Thyroid gland (tissue), 4 donors: ENCODE measurements at regions of chr22 and their contacts with region 1.

Region 1: DNA sequence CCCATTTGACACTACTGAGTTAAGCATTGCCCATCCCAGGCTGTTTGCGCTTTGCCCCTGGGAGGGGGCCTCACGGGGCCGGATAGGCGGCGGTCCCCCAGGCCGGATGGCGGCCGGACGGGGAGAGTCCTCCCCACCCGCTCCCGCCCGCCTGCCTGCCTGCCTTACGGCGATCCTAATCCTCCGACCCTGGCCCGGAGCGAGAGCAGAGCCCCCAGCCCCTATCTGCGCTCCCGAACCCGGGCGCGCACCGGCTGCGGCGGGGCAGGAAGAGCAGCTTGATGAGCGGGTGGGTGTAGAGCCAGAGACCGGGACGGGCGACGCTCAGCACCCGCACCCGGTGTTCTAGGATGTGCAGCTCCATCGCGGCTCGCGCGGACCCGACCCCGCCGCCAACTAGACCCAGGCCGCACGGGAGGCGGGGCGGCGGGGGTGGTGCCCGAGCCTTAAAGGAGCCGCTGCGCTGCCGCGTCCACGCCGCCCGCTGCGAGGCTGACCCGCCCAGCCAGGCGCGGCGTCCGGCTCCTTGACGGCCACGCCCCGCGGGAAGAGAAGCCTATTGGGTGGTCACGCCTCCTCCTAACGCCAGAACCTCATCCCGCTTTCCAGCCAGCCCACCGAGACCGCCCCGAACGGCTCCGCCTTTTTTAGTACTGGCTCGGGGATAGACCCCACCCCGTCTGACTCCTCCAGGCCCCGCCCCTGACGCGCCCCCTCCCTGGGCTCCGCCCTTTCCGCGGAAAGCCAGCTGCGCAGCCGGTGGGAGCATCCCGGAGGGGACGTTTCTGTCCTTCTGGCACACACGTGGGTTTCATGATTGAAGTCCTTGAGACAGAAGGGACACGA is at the start of gene CASTOR1:
- DNase-seq: peak; percentile 100
- H3K4me3 ChIP-seq: peak within 1 kb of the TSS; percentile 92 to 99 (median 96)
- H3K27ac ChIP-seq: peak within 1 kb of the TSS; percentile 96 to 97 (median 97)
- H3K4me1 ChIP-seq: peaks cover 33 to 38% of the 10 kb centered on the region in 2 donors
- H3K27me3 ChIP-seq: no peaks in the 10 kb centered on the region
- CTCF ChIP-seq: no peak
- POLR2A ChIP-seq: peak in 1 of 2 donors; percentile 87
- total RNA-seq, gene CASTOR1: 16.5 to 36.0 (median 27.7) TPM

Region 2: DNA sequence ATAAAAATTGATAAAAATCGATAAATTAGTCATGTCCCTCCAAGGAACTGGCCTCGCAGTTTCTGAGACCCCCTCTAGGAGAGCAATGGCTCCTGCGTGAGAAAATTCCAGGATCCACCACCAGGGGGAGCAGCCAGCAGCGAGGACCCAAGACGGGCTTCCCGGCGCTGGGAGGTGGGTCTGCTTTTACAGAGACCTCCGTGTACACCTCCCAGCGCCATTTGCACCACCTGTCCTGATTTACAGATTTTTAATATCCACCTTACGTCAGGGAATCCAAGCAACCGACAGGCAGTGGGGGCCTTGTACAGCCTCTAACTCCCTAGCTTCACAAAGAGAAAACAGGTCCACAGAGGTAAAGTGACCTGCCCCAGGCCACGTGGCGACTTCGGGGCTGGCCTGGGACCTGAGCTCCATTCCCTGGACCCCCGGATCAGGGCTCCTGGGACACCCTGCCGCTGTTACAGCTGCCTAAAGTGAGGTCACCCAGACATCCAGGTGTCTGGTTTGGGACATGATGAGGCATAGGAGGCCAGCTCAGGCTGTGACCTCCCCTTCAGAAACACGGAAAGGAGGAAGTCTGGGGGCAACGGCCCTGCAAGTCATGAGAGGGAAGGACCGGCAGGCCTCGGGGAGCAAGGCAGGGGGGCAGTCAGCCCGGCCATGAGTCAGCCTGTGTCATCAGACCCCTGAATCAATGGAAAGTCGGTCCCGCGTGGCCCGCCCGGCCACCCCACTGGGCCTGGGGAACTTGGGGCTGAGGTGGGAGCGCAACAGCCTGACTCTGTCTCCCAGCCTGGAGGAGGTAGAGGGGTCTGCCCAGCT is 26.2 kb before region 1 on chr22:
- intact Hi-C with region 1: loop called (anchors 2 kb)
- DNase-seq: peak; percentile 68 to 70
- H3K4me3 ChIP-seq: no peak overlapping the region
- H3K27ac ChIP-seq: no peak overlapping the region
- H3K4me1 ChIP-seq: peaks cover 4 to 6% of the 10 kb centered on the region in 2 donors
- H3K27me3 ChIP-seq: no peaks in the 10 kb centered on the region
- CTCF ChIP-seq: peak; percentile 90 to 98 (median 95)
- POLR2A ChIP-seq: no peak

Region 3: GRCh38 chr22:30326706-30327362 is 37.5 kb after region 1 on chr22 and contains the start of gene TBC1D10A:
- intact Hi-C with region 1: loop called (anchors 5 kb)
- DNase-seq: peak; percentile 97 to 99
- H3K4me3 ChIP-seq: peak within 1 kb of the TSS; percentile 44 to 99 (median 89)
- H3K27ac ChIP-seq: peak within 1 kb of the TSS; percentile 59 to 84 (median 59)
- H3K4me1 ChIP-seq: peaks cover 28 to 43% of the 10 kb centered on the region in 2 donors
- H3K27me3 ChIP-seq: no peaks in the 10 kb centered on the region
- CTCF ChIP-seq: peak in 1 of 6 experiments; percentile 1
- POLR2A ChIP-seq: peak; percentile 53 to 90
- total RNA-seq, gene TBC1D10A: 28.4 to 44.7 (median 35.9) TPM

Region 4: DNA sequence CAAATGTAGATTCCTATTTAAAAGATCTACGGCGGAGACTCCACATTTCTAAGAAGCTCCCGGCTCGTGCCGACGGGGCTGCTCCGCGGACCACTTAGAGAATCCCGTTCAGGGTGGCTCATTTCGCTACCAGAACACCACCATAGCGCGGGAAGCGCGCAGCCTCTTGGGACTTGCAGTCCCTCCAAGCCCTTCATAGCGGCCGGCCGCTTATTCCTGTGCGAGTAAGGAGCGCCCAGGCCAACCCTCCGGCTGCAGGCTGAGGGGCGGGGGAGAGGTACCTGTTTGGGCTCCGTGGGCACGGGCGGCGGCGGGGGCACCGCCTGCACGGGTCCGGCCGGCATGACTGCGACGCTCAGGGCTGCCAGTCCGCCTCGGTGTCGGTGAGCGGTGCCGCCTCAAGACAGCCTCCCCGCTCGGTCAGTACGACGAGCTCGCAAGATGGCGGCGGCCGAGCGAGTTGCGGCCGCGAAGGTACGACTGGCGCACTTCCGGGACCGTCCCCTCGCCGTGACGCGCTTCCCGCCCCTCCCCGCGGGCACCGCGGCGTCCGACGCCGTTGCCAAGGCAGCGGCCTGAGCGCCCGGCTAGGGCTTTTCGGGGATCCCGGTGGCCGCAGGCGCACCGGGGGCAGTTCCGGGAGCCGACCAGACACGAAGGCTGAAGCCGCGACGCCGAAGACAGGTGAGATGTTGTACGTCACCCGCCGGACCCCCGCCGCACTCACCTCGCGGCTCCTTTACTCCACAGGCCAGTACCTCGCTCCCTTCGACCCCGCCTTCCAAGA is 67.3 kb after region 1 on chr22 and contains the starts of genes CCDC157 and SF3A1:
- intact Hi-C with region 1: loop called (anchors 2 kb)
- DNase-seq: peak; percentile 91 to 93
- H3K4me3 ChIP-seq: peak within 1 kb of the TSS; percentile 58 to 93 (median 66)
- H3K27ac ChIP-seq: peak within 1 kb of the TSS; percentile 93 to 97 (median 95)
- H3K4me1 ChIP-seq: peaks cover 23 to 34% of the 10 kb centered on the region in 2 donors
- H3K27me3 ChIP-seq: no peaks in the 10 kb centered on the region
- CTCF ChIP-seq: peak in 1 of 6 experiments; percentile 16
- POLR2A ChIP-seq: peak in 1 of 2 donors; percentile 93
- total RNA-seq, gene CCDC157: 8.1 to 18.3 (median 15.6) TPM
- total RNA-seq, gene SF3A1: 52.8 to 193 (median 135) TPM

Region 5: GRCh38 chr22:30441088-30441487 is 151.7 kb after region 1 on chr22:
- intact Hi-C with region 1: no loop called
- DNase-seq: no peak
- H3K4me3 ChIP-seq: no peak overlapping the region
- H3K27ac ChIP-seq: no peak overlapping the region
- H3K4me1 ChIP-seq: no peaks in the 10 kb centered on the region
- H3K27me3 ChIP-seq: no peaks in the 10 kb centered on the region
- CTCF ChIP-seq: no peak
- POLR2A ChIP-seq: no peak

Region 6: DNA sequence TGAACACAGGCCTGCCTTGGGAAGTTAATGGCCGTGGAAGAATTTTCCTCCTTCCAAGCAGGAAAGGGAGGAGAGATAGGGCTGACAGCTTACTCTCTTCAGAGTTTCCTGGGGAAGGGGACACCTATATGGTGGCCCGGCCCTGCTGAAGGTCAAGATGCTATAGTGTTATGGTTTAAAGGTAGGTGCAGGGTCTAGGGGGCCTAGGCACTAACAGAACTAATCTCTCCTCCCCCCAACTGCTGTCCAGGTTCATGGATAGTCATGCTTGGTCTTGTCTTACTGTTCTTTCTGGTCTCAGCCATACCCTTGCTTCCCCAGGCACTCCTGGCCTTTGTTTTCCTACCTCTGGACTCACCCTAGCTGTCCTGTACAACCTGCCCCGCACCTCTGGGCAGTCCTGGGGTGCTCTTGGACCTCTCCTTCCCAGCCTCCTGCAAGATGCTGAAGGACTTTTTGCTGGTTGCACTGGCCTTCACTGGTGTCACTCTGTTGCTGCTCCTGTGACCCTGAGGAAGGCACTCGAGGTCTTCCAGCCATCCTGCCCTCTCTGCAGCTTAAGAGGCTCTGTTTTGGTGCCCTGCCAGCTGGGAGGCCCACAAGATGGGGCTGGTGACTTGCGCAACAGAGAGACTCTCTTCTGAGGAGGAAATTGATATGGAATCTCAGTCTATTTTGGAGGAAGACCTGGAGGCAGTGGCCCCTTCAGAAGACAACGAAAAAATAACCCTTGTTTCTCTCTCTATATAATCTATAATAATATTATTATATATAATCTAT is 164.6 kb after region 1 on chr22:
- intact Hi-C with region 1: no loop called
- DNase-seq: peak; percentile 55 to 58
- H3K4me3 ChIP-seq: no peak overlapping the region
- H3K27ac ChIP-seq: no peak overlapping the region
- H3K4me1 ChIP-seq: peaks cover 0 to 3% of the 10 kb centered on the region in 2 donors
- H3K27me3 ChIP-seq: no peaks in the 10 kb centered on the region
- CTCF ChIP-seq: no peak
- POLR2A ChIP-seq: no peak